ENCODE measurements at regions of chr2 and their contacts with region 1.

Region 1: GRCh38 chr2:212777020-212777491 is 238.5 kb upstream of the ERBB4 start:
- DNase-seq: no peak
- ATAC-seq: peak in 2 of 4 donors; percentile 52 to 60
- H3K4me3 ChIP-seq: peak overlapping the region; percentile 7
- H3K27ac ChIP-seq: no peak overlapping the region
- H3K4me1 ChIP-seq: no peaks in the 10 kb centered on the region
- H3K27me3 ChIP-seq: no peaks in the 10 kb centered on the region
- CTCF ChIP-seq: peak; percentile 75

Region 2: DNA sequence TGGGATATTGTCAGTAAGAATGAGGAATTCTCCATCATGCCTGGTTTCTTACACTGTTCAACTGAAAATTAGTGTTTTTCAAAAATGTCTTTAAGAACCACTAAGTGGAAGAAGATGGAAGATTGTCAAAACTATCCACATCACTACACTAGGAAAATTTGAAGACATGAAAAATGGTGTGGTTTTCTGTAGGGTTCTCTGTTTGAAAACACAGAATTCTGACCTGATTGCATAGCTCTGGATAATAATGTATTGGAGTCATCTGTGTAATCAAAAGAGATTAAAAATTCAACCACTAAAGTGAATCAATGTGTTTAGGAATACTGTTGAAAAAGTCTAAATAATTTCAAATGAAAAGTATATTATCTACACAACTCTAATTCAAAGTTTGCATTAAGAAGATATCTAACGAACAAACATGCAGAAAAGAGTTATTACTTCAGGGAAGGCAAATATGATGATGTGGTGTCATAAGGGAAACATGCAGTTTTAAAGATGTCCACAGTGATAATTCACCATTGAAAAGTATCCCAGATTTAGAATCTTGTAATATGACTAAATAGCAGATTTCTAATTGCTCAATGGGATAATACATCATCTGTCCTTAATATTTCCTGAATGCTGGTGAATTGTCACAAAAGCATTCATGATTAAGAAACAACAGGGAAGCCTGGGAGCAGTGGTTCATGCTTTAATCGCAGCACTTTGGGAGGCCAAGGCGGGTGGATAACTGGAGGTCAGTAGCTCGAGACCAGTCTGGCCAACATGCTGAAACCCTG is 355.3 kb before region 1 on chr2:
- intact Hi-C with region 1: no loop called
- DNase-seq: no peak
- ATAC-seq: no peak
- H3K4me3 ChIP-seq: no peak overlapping the region
- H3K27ac ChIP-seq: no peak overlapping the region
- H3K4me1 ChIP-seq: no peaks in the 10 kb centered on the region
- H3K27me3 ChIP-seq: no peaks in the 10 kb centered on the region
- CTCF ChIP-seq: no peak

Region 3: DNA sequence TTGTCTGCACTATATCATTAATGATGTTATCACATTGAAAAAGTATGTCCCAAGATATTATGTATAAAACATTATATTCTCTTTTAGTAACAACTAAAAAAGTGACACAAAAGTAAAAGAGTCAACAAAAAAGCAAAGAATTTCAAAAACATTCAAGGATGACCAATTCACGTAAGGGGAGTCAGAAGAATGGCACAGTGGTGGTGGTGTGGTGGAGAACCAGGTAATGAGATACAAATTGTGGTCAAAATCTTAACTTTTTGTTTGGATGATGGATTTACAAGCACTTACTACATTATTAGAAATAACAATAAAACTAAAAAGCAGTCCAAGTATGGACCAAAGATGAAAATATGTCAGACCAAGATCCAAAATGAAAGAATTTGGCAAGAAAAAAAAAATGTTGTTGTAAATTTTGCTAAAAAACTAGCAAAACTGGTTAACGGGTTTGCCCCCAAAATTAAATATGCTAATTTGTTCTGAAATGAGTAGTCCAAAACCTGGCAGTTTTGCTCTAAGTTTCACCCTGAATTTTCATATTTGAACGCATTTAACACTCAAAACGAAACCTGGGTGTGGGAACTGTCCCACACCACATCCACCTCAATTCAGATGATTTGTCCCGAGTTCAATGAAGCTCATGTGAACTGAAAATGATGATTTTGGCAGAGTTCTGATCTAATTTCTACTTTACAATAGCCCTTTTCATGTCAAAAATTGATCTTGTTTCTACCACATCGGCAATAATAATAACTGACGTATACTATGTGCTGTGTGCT is 238.5 kb after region 1 on chr2:
- intact Hi-C with region 1: loop called in 1 of 2 experiments (anchors 10 kb)
- DNase-seq: no peak
- ATAC-seq: no peak
- H3K4me3 ChIP-seq: no peak overlapping the region
- H3K27ac ChIP-seq: no peak overlapping the region
- H3K4me1 ChIP-seq: no peaks in the 10 kb centered on the region
- H3K27me3 ChIP-seq: no peaks in the 10 kb centered on the region
- CTCF ChIP-seq: no peak

Region 4: DNA sequence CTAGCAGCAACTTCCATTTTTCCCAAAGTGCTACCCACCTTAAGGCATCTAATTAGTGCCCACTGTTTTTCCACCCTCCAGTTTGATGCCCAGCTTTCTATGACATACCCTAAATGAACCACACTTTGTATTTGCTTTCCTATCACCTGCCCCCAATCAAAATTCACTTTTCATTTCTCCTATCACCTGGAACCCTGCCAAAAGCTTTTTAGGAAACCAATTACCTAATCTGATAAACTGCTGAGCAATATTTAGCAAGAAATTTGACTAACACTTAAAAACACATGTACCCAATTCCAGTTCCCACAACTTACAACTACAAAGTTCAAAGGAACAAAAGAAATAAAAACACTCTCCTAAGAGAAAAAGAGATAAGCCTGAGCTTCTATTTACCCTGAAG is 302.7 kb after region 1 on chr2:
- intact Hi-C with region 1: loop called in 1 of 2 experiments (anchors 10 kb)
- DNase-seq: no peak
- ATAC-seq: no peak
- H3K4me3 ChIP-seq: no peak overlapping the region
- H3K27ac ChIP-seq: no peak overlapping the region
- H3K4me1 ChIP-seq: no peaks in the 10 kb centered on the region
- H3K27me3 ChIP-seq: no peaks in the 10 kb centered on the region
- CTCF ChIP-seq: no peak

Measured in psoas muscle (tissue), 8 donors.